ENCODE measurements at regions of chr10 and their contacts with region 1.

Region 1: GRCh38 chr10:79068562-79069324 is at the start of gene ZMIZ1:
- DNase-seq: peak; percentile 78
- ATAC-seq: peak; percentile 66
- H3K4me3 Mint-ChIP-seq: peak within 1 kb of the TSS; percentile 89
- H3K27ac Mint-ChIP-seq: peak within 1 kb of the TSS; percentile 75
- H3K4me1 Mint-ChIP-seq: peaks cover 30% of the 10 kb centered on the region
- H3K27me3 Mint-ChIP-seq: peaks cover 21% of the 10 kb centered on the region
- CTCF ChIP-seq: no peak
- total RNA-seq, gene ZMIZ1: 88.2 and 93.9 TPM in 2 replicates

Region 2: DNA sequence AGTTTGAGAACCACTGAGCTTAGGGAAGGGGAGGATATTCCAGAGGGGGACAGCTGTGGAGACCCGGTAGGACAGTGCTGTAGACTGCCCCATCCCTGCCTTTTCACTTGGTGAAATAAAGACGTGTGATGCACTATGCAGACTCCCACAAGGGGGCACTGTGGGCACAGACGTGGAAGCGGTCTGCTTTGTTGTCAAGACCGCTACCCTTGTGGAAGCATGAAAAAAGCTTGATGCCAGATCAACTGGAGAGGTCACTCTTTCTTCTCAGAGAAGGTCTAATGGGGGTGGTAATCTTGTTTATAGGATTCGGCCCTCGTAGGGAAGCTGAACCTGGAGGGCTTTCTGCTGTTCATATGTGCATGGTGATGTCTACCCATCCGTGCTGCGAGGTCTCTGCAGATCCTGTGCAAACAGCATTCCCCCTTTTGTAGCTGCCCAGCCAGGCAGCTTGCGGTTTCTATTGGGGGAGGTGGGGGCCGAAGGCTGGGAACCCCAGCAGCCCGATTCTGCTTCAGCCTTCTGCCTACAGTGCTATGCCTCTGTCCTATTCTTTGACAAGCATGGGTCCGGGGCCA is 1021.3 kb before region 1 on chr10:
- CTCF ChIA-PET with region 1: no interaction called
- POLR2A ChIA-PET with region 1: no interaction called
- intact Hi-C with region 1: loop called (anchors 5 kb)
- DNase-seq: peak; percentile 63
- ATAC-seq: peak; percentile 74
- H3K4me3 Mint-ChIP-seq: no peak overlapping the region
- H3K27ac Mint-ChIP-seq: no peak overlapping the region
- H3K4me1 Mint-ChIP-seq: peaks cover 22% of the 10 kb centered on the region
- H3K27me3 Mint-ChIP-seq: no peaks in the 10 kb centered on the region
- CTCF ChIP-seq: peak; percentile 45

Region 3: GRCh38 chr10:78600740-78601139 is 468.0 kb before region 1 on chr10:
- CTCF ChIA-PET with region 1: no interaction called
- POLR2A ChIA-PET with region 1: no interaction called
- intact Hi-C with region 1: no loop called
- DNase-seq: no peak
- ATAC-seq: no peak
- H3K4me3 Mint-ChIP-seq: no peak overlapping the region
- H3K27ac Mint-ChIP-seq: no peak overlapping the region
- H3K4me1 Mint-ChIP-seq: no peaks in the 10 kb centered on the region
- H3K27me3 Mint-ChIP-seq: peaks cover 13% of the 10 kb centered on the region
- CTCF ChIP-seq: no peak

Region 4: DNA sequence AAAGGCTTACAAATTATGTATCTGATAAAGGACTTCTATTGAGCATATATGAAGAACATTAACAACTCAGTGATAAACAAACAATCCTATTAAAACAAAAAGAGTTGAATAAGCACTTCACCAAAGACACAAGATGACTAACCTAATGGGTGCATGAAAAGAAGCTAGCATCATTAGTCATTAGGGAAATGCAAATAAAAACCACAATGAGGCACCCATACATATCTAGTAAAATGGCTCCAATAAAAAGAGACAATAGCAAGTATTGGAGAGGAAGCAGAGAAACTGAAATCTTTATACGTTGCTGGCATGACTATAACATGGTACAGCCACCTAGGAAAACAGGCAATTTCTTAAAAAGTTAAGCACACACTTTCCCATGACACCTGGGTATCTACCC is 77.6 kb before region 1 on chr10:
- CTCF ChIA-PET with region 1: no interaction called
- POLR2A ChIA-PET with region 1: no interaction called
- intact Hi-C with region 1: loop called (anchors 5 kb)
- DNase-seq: no peak
- ATAC-seq: peak; percentile 59
- H3K4me3 Mint-ChIP-seq: no peak overlapping the region
- H3K27ac Mint-ChIP-seq: no peak overlapping the region
- H3K4me1 Mint-ChIP-seq: peaks cover 29% of the 10 kb centered on the region
- H3K27me3 Mint-ChIP-seq: peaks cover 22% of the 10 kb centered on the region
- CTCF ChIP-seq: no peak

Region 5: DNA sequence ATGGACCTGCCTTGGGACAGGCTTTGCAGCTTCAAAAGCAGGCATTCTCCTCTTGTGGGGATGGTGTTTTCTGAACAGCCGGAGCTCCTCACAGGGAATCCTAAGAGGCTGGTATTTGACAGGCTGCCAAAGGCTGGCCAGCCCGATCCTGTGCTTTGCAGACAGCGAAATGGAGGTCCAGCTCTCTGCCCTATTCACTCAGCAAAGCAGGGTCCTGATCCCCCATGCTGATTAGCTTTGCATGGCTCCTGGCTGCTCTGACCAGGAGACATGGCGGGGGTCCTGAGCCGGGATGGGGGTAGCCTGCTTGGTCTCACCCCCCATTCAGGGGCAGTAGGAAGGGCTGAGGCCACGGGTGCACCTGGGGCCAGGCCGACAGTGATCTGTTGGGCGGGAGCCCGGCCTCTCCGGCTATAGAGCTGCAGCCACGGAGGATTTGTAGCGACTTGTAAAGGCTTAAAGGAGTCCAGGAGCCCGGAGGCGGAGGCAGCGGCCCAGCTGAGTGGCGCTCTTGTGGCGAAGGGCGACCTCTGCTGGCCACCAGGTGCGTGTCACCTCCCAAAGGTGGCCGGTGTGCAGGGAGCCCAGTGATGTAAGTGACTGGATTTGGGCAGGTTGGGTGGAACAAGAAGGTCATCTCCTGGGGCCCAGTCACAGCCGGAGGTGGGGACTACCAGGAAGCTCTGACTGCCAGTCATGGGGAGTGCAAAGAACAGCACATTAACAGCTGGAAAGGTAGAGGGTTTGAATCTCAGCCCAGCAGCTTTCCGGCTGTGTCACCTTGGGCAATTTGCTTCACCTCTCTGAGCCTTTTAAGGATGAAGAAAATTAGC is 126.6 kb after region 1 on chr10:
- CTCF ChIA-PET with region 1: interaction called, 10 read pairs
- POLR2A ChIA-PET with region 1: interaction called, 4 read pairs
- intact Hi-C with region 1: loop called (anchors 1 kb)
- DNase-seq: peak; percentile 68
- ATAC-seq: peak; percentile 63
- H3K4me3 Mint-ChIP-seq: no peak overlapping the region
- H3K27ac Mint-ChIP-seq: no peak overlapping the region
- H3K4me1 Mint-ChIP-seq: peaks cover 14% of the 10 kb centered on the region
- H3K27me3 Mint-ChIP-seq: peaks cover 8% of the 10 kb centered on the region
- CTCF ChIP-seq: peak; percentile 98

Region 6: GRCh38 chr10:79286318-79286951 is 217.7 kb after region 1 on chr10:
- CTCF ChIA-PET with region 1: no interaction called
- POLR2A ChIA-PET with region 1: no interaction called
- intact Hi-C with region 1: loop called (anchors 5 kb)
- DNase-seq: peak; percentile 81
- ATAC-seq: peak; percentile 89
- H3K4me3 Mint-ChIP-seq: peak overlapping the region; percentile 78
- H3K27ac Mint-ChIP-seq: peak overlapping the region; percentile 97
- H3K4me1 Mint-ChIP-seq: peaks cover 79% of the 10 kb centered on the region
- H3K27me3 Mint-ChIP-seq: no peaks in the 10 kb centered on the region
- CTCF ChIP-seq: no peak

Region 7: GRCh38 chr10:79445141-79445976 is 376.6 kb after region 1 on chr10 and contains the start of gene ZCCHC24:
- CTCF ChIA-PET with region 1: no interaction called
- POLR2A ChIA-PET with region 1: no interaction called
- intact Hi-C with region 1: loop called (anchors 2 kb)
- DNase-seq: peak; percentile 92
- ATAC-seq: peak; percentile 93
- H3K4me3 Mint-ChIP-seq: peak within 1 kb of the TSS; percentile 87
- H3K27ac Mint-ChIP-seq: peak within 1 kb of the TSS; percentile 50
- H3K4me1 Mint-ChIP-seq: peaks cover 26% of the 10 kb centered on the region
- H3K27me3 Mint-ChIP-seq: peaks cover 2% of the 10 kb centered on the region
- CTCF ChIP-seq: no peak
- total RNA-seq, gene ZCCHC24: 1.1 and 1.3 TPM in 2 replicates